T-cell (primary cell): ENCODE measurements at regions of chr1 and their contacts with region 1.

Region 1: GRCh38 chr1:28835237-28835650 is 23.3 kb downstream of the OPRD1 start:
- DNase-seq: no peak
- ATAC-seq: no peak
- H3K4me3 ChIP-seq: no peak overlapping the region
- H3K4me3 Mint-ChIP-seq: no peak overlapping the region
- H3K27ac ChIP-seq: no peak overlapping the region
- H3K27ac Mint-ChIP-seq: no peak overlapping the region
- H3K4me1 ChIP-seq: no peaks in the 10 kb centered on the region
- H3K4me1 Mint-ChIP-seq: no peaks in the 10 kb centered on the region
- H3K27me3 ChIP-seq: peaks cover 0 to 16% of the 10 kb centered on the region in 2 experiments
- H3K27me3 Mint-ChIP-seq: peaks cover 2 to 8% of the 10 kb centered on the region in 2 donors

Region 2: DNA sequence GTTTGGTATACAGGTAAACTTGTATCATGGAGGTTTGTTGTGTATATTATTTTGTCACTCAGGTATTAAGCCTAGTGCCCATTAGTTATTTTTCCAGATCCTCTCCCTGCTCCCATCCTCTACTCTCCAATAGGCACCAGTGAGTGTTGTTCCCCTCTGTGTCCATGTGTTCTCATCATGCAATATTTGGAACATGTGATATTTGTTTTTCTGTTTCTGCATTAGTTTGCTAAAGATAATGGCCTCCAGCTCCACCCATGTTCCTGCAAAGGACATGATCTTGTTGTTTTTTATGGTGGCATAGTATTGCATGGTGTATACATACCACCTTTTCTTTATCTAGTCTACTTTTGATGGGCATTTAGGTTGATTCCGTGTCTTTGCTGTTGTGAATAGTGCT is 454.9 kb before region 1 on chr1:
- CTCF ChIA-PET with region 1: interaction called in 1 of 2 experiments, 15 read pairs
- POLR2A ChIA-PET with region 1: no interaction called
- DNase-seq: no peak
- ATAC-seq: no peak
- H3K4me3 ChIP-seq: no peak overlapping the region
- H3K4me3 Mint-ChIP-seq: no peak overlapping the region
- H3K27ac ChIP-seq: no peak overlapping the region
- H3K27ac Mint-ChIP-seq: no peak overlapping the region
- H3K4me1 ChIP-seq: peaks cover 0 to 2% of the 10 kb centered on the region in 2 experiments
- H3K4me1 Mint-ChIP-seq: peaks cover 35 to 42% (median 39%) of the 10 kb centered on the region in 3 donors
- H3K27me3 ChIP-seq: no peaks in the 10 kb centered on the region
- H3K27me3 Mint-ChIP-seq: no peaks in the 10 kb centered on the region